ENCODE measurements at regions of chr9 and their contacts with region 1.

Region 1: DNA sequence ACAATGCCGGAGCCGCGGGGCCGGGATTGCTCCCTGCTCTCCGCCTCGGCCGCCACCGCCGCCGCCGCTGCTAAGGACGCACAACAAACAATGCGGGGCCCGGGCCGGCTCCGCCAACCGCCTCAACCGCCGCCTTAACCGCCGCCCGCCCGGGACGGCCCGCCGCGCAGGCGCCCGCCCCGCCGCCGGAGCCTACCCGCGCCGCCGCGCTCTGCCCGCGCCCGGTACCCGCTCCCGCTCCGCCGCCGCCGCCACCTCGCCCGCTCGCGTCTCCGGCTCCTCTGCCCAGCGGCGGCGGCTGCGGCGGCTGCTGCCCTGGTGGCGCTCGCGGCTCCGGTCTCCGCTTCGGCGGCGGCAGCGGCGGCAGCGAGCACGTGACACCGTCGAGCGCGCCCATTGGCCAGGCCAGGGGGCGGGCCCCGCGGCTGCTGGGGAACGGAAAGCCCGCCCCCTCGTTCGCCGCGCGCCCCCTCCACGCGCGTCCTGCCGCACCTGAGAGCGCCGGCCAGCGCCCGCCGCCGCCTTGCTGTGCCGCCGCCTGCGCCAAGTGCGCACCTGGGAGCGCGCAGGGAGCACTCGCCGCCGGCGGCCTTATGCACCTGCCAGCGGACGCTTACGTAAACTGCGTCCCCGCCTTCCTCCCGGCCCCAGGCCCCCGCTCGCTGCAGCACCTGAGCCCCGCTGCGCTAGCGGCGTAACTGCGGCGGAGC is at the start of gene STRBP:
- DNase-seq: peak; percentile 96
- ATAC-seq: peak; percentile 91
- H3K4me3 Mint-ChIP-seq: peak within 1 kb of the TSS; percentile 83
- H3K27ac Mint-ChIP-seq: peak within 1 kb of the TSS; percentile 78
- H3K4me1 Mint-ChIP-seq: peaks cover 50% of the 10 kb centered on the region
- H3K27me3 Mint-ChIP-seq: no peaks in the 10 kb centered on the region
- CTCF ChIP-seq: no peak
- total RNA-seq, gene STRBP: 124 and 127 TPM in 2 replicates

Region 2: DNA sequence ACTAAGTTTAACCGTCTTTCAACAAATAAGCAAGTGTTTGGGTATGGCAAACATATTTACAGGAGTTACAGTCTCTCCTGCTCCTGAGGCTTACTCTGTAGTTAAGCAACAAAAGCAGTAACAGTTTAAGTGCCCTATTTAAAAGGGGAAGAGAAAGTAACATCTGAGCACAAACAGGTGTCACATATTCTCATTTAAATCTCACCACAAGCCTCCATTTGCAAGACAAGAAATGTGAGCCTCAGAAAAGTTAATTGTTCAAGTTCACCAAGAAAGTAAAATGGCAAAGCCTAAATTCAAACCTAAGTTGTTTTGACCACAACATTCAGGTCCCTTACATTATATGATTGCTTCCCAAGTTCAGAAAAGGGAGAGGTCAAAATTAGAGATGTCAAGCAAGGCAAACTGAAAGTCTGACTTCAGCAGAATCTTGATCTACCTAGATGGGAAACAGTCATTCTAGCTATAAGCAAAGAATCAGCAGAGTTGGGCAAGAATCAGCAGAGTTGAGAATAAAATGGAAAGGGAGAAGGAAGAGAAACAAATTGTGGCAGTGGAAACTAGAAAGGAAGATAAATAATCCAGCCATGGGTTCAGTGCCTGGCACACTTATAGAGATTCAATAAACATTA is 93.4 kb before region 1 on chr9:
- CTCF ChIA-PET with region 1: no interaction called
- POLR2A ChIA-PET with region 1: interaction called, 4 read pairs
- intact Hi-C with region 1: loop called (anchors 1 kb)
- DNase-seq: no peak
- ATAC-seq: peak; percentile 91
- H3K4me3 Mint-ChIP-seq: peak overlapping the region; percentile 63
- H3K27ac Mint-ChIP-seq: peak overlapping the region; percentile 97
- H3K4me1 Mint-ChIP-seq: peaks cover 82% of the 10 kb centered on the region
- H3K27me3 Mint-ChIP-seq: no peaks in the 10 kb centered on the region
- CTCF ChIP-seq: no peak

Region 3: DNA sequence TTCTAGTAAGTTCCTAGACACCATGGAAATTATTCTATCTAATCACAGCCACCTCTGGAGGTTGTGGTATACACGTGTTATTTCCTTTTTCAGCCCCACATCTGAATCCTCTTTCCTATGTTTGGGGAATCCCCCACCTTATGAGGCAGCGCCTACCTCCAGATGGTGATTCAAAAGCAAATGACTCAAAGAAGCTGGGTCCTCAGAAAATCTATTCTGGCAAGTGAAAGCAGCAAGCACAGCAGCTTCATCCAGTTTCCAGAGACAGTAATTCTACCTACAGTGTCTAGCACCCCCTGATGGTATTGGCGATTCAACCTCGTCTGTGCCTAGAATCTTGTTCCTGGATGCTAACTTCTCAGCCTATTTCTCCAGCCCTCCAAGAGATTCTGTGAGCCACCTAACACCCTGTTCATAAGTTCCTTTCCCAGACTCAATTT is 43.0 kb before region 1 on chr9:
- CTCF ChIA-PET with region 1: interaction called, 4 read pairs
- POLR2A ChIA-PET with region 1: interaction called, 3 read pairs
- intact Hi-C with region 1: loop called (anchors 2 kb)
- DNase-seq: no peak
- ATAC-seq: peak; percentile 92
- H3K4me3 Mint-ChIP-seq: peak overlapping the region; percentile 45
- H3K27ac Mint-ChIP-seq: peak overlapping the region; percentile 84
- H3K4me1 Mint-ChIP-seq: peaks cover 55% of the 10 kb centered on the region
- H3K27me3 Mint-ChIP-seq: no peaks in the 10 kb centered on the region
- CTCF ChIP-seq: no peak

Region 4: DNA sequence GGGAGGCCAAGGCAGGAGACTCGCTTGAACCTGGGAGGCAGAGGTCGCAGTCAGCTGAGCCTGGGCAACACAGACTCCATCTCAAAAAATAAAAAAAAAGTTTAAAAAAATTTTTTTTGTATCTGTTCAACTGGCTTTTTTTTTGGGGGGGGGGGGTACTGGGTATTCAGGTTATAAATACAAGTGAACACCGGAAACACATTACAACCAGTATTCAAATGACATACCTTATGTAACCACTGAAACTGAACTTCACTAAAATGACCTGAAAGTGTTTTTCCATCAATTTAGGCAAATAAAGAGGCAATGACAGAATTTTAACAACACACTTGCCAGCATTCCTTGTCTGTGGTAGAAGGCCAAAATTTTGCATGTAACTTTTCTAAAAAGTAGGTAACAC is 33.5 kb before region 1 on chr9:
- CTCF ChIA-PET with region 1: no interaction called
- POLR2A ChIA-PET with region 1: interaction called, 11 read pairs
- intact Hi-C with region 1: loop called (anchors 1 kb)
- DNase-seq: no peak
- ATAC-seq: peak; percentile 42
- H3K4me3 Mint-ChIP-seq: peak overlapping the region; percentile 69
- H3K27ac Mint-ChIP-seq: peak overlapping the region; percentile 94
- H3K4me1 Mint-ChIP-seq: peaks cover 49% of the 10 kb centered on the region
- H3K27me3 Mint-ChIP-seq: no peaks in the 10 kb centered on the region
- CTCF ChIP-seq: no peak

Region 5: DNA sequence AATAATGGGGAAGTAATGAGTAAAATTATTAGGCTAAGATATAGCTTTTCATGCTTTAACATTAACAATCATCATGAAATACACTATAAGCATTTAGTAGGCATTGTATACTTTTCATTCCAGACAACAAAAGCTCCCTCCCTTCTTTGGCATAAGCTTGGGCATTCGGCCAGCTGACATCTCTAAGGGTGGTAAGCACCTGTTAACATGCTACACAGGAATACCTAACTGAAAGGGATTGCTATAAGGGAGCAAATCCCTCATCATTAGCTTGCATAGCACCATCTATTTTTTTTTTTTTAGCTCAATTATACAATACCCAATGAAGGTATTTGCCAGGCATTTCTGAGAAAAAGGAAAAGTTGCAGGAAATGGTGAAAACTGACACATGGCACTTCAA is 16.7 kb before region 1 on chr9:
- CTCF ChIA-PET with region 1: no interaction called
- POLR2A ChIA-PET with region 1: interaction called, 12 read pairs
- intact Hi-C with region 1: loop called (anchors 2 kb)
- DNase-seq: no peak
- ATAC-seq: no peak
- H3K4me3 Mint-ChIP-seq: no peak overlapping the region
- H3K27ac Mint-ChIP-seq: peak overlapping the region; percentile 62
- H3K4me1 Mint-ChIP-seq: peaks cover 82% of the 10 kb centered on the region
- H3K27me3 Mint-ChIP-seq: no peaks in the 10 kb centered on the region
- CTCF ChIP-seq: no peak

Region 6: GRCh38 chr9:123302348-123303214 is 34.2 kb after region 1 on chr9:
- CTCF ChIA-PET with region 1: no interaction called
- POLR2A ChIA-PET with region 1: interaction called, 7 read pairs
- intact Hi-C with region 1: loop called (anchors 5 kb)
- DNase-seq: no peak
- ATAC-seq: no peak
- H3K4me3 Mint-ChIP-seq: no peak overlapping the region
- H3K27ac Mint-ChIP-seq: no peak overlapping the region
- H3K4me1 Mint-ChIP-seq: peaks cover 14% of the 10 kb centered on the region
- H3K27me3 Mint-ChIP-seq: no peaks in the 10 kb centered on the region
- CTCF ChIP-seq: no peak

Region 7: DNA sequence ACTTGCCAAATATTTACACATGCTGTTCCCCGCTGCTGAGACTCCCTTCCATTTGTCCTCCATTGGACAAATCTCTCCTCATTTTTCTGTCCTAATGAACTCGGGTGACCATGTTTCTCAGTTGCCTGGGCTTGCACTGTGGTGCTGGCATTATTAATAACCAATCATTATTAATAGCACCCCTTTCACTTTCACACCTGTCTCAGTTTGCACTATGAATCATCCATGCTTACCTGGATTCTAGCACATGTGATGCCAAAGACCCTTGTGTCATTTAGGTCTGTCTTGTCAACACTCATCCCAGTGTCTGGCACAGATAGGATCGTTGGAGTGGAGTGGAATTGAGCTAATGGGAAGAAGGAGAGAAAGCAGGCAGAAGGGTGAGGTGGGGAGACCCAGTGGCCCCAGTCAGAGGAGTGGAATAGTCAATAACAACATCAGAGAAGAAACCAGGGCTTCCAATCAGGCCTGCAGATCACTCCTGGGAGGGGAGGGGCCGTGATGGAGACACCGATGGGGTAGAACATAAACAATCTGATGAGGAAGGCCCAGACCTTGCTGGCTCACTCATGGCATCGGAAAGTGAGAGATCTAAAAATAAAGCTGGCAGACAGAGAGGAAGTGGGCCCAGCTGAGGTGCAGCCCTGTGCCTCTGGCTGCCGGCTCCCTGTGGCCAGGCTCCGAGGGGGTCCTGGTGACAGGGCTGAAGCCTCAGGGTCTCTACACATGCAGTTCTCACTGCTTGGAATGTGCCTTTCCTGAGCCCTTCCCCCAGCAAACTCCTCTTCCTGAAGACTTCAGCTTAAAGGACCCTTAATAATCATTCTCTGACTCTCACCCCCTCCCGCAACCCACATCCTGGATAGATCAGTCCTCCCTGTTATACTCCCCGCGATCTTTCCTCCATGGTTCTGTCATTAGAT is 54.1 kb after region 1 on chr9:
- CTCF ChIA-PET with region 1: no interaction called
- POLR2A ChIA-PET with region 1: interaction called, 6 read pairs
- intact Hi-C with region 1: loop called (anchors 2 kb)
- DNase-seq: peak; percentile 53
- ATAC-seq: peak; percentile 79
- H3K4me3 Mint-ChIP-seq: peak overlapping the region; percentile 75
- H3K27ac Mint-ChIP-seq: peak overlapping the region; percentile 94
- H3K4me1 Mint-ChIP-seq: peaks cover 90% of the 10 kb centered on the region
- H3K27me3 Mint-ChIP-seq: no peaks in the 10 kb centered on the region
- CTCF ChIP-seq: no peak